ENCODE measurements at regions of chr14 and their contacts with region 1.

Region 1: GRCh38 chr14:51996148-51996746 is 6.9 kb downstream of the RTRAF start:
- DNase-seq: no peak
- H3K4me3 ChIP-seq: no peak overlapping the region
- H3K27ac ChIP-seq: peak overlapping the region in 1 of 4 donors; percentile 20
- H3K4me1 ChIP-seq: peaks cover 10 to 43% (median 31%) of the 10 kb centered on the region in 4 donors
- H3K27me3 ChIP-seq: no peaks in the 10 kb centered on the region
- CTCF ChIP-seq: peak; percentile 78 to 83 (median 81)
- EP300 ChIP-seq: no peak
- POLR2A ChIP-seq: no peak

Region 2: DNA sequence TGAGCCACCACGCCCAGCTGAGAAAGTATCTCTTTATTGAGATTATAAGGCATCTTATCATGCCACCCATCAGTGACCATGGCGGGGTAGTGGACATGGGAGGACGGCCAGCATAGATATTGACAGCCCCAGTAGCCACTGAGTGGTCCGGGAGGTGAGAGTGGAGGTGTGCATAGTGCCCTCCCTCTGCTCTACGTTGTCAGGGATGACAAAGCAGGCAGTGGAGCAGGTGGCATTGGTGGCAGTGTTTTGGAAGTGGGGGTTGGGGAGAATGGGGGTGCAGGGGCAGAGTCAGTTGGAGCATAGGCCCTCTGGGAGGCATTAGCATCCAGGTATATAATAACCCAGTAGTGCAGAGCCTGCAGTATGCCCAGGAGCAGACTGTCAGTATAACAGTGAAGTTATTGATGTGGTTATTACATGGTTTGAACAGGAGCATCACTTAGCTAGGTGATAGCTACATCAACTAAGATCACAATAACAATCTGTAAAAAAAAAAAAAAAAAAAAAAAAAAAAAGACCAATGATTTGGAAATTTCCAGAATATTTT is 94.7 kb before region 1 on chr14:
- intact Hi-C with region 1: no loop called
- DNase-seq: no peak
- H3K4me3 ChIP-seq: no peak overlapping the region
- H3K27ac ChIP-seq: no peak overlapping the region
- H3K4me1 ChIP-seq: peaks cover 0 to 4% (median 0%) of the 10 kb centered on the region in 4 donors
- H3K27me3 ChIP-seq: no peaks in the 10 kb centered on the region
- CTCF ChIP-seq: no peak
- EP300 ChIP-seq: no peak
- POLR2A ChIP-seq: no peak

Region 3: DNA sequence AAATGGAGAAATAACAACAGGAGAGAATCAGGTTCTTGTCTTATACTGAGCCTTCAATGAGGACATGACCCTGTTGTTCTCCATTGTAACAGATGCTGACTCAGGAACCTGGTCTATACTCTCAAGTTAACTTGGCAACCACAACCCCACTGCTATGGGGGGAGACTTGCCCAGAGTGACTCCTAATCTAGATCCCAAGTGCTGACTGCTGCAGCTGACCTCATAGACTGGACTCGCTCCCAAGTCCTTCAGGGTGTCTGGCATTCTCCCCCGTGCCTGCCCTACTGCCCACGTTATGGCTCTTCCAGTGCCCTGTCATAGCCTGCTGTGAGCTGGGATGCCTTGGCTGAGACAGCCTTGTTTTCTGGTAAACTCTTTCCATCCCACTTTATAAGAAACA is 35.5 kb after region 1 on chr14:
- intact Hi-C with region 1: loop called (anchors 5 kb)
- DNase-seq: no peak
- H3K4me3 ChIP-seq: no peak overlapping the region
- H3K27ac ChIP-seq: peak overlapping the region in 3 of 4 donors; percentile 25 to 47 (median 35)
- H3K4me1 ChIP-seq: peaks cover 13 to 35% (median 24%) of the 10 kb centered on the region in 4 donors
- H3K27me3 ChIP-seq: no peaks in the 10 kb centered on the region
- CTCF ChIP-seq: no peak
- EP300 ChIP-seq: no peak
- POLR2A ChIP-seq: no peak

Region 4: DNA sequence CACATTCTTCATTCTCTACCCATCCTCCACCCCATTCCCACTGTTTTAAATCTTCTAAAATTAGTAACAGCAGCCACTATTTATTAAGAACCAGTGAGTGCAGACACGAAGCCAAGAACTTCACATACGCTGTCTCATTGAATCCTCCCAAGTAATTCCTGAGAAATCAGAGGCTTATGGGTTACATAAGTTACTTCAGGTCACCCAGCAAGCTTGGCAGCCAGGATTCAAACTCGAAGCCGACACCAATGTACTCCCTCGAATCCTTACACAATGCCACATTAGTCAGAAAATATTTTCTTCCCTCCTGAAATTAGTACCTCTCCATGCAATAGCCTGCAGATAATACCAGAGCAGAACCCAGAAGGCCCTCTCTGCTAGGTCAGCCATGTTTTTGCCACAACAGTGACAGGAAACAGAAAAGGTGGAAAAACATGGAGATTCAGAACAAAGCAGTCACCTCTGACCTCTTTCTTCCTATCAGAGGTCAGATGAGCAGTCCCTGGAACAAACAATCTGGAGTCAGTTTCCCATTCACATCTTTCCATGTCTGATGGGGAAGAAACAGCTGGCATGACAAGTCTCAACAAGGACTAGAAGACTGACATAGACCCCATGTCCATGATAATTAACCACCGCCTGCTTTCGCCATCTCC is 56.2 kb after region 1 on chr14:
- intact Hi-C with region 1: no loop called
- DNase-seq: peak; percentile 92
- H3K4me3 ChIP-seq: peak overlapping the region in 2 of 4 donors; percentile 10 to 17
- H3K27ac ChIP-seq: peak overlapping the region; percentile 82 to 92 (median 84)
- H3K4me1 ChIP-seq: peaks cover 75 to 88% (median 81%) of the 10 kb centered on the region in 4 donors
- H3K27me3 ChIP-seq: no peaks in the 10 kb centered on the region
- CTCF ChIP-seq: no peak
- EP300 ChIP-seq: no peak
- POLR2A ChIP-seq: no peak

Region 5: GRCh38 chr14:52069304-52070050 is 73.2 kb after region 1 on chr14:
- intact Hi-C with region 1: loop called (anchors 5 kb)
- DNase-seq: peak; percentile 92
- H3K4me3 ChIP-seq: peak overlapping the region; percentile 75 to 86 (median 80)
- H3K27ac ChIP-seq: peak overlapping the region; percentile 91 to 95 (median 93)
- H3K4me1 ChIP-seq: peaks cover 18 to 47% (median 37%) of the 10 kb centered on the region in 4 donors
- H3K27me3 ChIP-seq: no peaks in the 10 kb centered on the region
- CTCF ChIP-seq: peak in 1 of 3 experiments; percentile 9
- EP300 ChIP-seq: no peak
- POLR2A ChIP-seq: no peak